Head of caudate nucleus (tissue), 42 donors: ENCODE measurements at regions of chr10 and their contacts with region 1.

Region 1: GRCh38 chr10:103605359-103606095 is 112.0 kb downstream of the NEURL1 start:
- DNase-seq: peak in 36 of 42 donors; percentile 29 to 89 (median 64)

Region 2: DNA sequence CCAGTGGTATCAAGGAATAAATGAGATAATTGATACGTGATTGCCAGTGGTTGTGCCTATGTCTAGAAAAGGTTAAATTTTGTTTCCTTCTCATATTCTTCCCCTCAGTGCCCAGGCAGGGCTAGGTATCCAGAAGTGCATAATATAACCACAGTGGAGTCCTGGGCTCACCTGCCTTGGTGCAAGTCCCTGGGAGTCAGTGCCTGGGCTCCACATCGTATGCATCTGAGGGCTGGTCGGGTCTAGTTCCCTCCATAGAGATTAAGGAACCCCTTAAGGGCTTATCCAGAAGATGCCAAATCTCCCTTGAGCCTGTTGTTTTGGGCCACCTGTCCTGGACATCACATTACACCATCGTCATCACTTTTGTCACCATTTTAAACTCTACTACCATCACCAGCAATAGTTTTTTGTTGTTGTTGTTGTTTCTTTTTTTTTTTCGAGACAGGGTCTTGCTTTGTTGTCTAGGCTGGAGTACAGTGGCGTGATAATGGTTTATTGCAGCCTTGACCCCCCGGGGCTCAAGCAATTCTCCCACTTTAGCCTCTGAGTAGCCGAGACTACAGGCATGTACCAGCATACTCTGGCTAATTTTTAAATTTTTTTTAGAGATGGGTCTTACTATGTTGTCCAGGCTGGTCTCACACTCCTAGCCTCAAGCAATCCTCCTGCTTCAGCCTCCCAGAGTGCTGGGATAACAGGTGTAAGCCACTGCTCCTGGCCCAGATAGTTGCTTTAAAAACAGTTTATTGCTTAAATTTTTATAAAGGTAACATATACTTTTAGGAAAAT is 86.0 kb before region 1 on chr10:
- intact Hi-C with region 1: no loop called
- DNase-seq: peak in 3 of 42 donors; percentile 1 to 24 (median 19)

Region 3: GRCh38 chr10:103685880-103686669 is 80.5 kb after region 1 on chr10:
- intact Hi-C with region 1: loop called (anchors 2 kb)
- DNase-seq: peak; percentile 63 to 95 (median 88)

Region 4: GRCh38 chr10:103859161-103860086 is 253.9 kb after region 1 on chr10:
- intact Hi-C with region 1: loop called (anchors 10 kb)
- DNase-seq: peak in 38 of 42 donors; percentile 37 to 91 (median 76)

Region 5: GRCh38 chr10:103888113-103888841 is 282.8 kb after region 1 on chr10:
- intact Hi-C with region 1: loop called (anchors 10 kb)
- DNase-seq: peak in 14 of 42 donors; percentile 17 to 65 (median 44)